ENCODE measurements at regions of chr14 and their contacts with region 1.

Region 1: DNA sequence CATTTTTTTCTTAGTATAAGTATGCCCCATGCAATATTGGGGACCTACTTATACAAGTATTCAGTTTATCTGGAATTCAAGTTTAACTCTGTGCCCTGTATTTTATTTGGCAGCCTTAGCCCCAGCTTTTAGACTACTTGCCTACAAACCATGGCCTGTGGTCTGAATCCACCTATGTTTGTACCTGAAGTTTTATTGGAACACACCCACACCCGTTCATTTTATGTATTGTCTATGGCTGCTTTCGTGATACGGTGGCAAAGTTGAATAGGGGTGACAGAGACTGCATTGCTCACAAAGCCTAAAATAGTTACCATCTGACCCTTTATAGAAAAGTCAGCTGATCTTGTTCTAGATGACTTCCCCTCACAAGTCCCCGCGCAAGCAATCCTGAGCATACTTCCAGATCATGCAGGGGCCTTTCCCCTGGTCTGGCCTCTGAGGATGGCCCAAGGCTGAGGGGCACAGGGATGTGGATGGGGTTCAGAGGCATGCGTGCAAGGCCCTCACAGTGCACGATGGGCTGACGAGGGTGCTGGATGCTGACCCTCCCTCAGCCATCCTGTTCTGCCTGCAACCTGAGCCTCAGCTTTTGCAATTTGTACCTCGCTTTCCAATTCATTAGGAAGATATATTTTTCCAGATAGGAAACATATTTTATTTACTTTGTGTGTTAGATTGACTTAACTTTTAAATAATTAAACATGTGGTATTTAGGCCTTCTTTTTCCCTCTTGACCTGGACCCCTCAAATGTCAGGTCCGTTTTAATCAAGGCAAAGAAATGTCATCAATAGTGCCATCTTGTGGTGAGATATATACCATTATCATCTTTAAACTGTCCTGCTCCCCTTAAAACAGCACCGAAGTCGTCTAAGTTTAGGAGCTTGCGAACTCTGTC is 527.3 kb upstream of the CCDC196 start:
- DNase-seq: no peak
- ATAC-seq: no peak
- H3K4me3 Mint-ChIP-seq: no peak overlapping the region
- H3K27ac Mint-ChIP-seq: no peak overlapping the region
- H3K4me1 Mint-ChIP-seq: peaks cover 21% of the 10 kb centered on the region
- H3K27me3 Mint-ChIP-seq: no peaks in the 10 kb centered on the region

Region 2: GRCh38 chr14:65704850-65705249 is 254.1 kb before region 1 on chr14:
- CTCF ChIA-PET with region 1: no interaction called
- POLR2A ChIA-PET with region 1: no interaction called
- intact Hi-C with region 1: loop called in 1 of 2 experiments (anchors 10 kb)
- DNase-seq: peak; percentile 67
- ATAC-seq: peak; percentile 96
- H3K4me3 Mint-ChIP-seq: no peak overlapping the region
- H3K27ac Mint-ChIP-seq: peak overlapping the region; percentile 84
- H3K4me1 Mint-ChIP-seq: peaks cover 20% of the 10 kb centered on the region
- H3K27me3 Mint-ChIP-seq: no peaks in the 10 kb centered on the region

Region 3: DNA sequence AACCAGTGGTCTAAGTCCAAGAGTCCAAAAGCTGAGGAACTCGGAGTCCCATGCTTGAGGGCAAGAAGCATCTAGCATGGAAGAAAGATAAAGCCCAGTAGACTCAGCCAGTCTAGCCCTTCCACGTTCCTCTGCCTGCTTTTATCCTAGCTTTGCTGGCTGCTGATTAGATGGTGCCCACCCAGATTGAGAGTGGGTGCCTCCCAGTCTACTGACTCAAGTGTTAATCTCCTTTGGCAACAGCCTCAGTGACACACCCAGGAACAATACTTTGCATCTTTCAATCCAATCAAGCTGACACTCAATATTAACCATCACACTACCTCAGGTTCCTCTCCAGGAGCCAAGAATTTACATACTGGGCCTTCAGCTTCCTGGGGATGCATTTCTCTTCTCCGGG is 70.2 kb before region 1 on chr14:
- CTCF ChIA-PET with region 1: no interaction called
- POLR2A ChIA-PET with region 1: no interaction called
- intact Hi-C with region 1: no loop called
- DNase-seq: no peak
- ATAC-seq: no peak
- H3K4me3 Mint-ChIP-seq: no peak overlapping the region
- H3K27ac Mint-ChIP-seq: no peak overlapping the region
- H3K4me1 Mint-ChIP-seq: peaks cover 3% of the 10 kb centered on the region
- H3K27me3 Mint-ChIP-seq: no peaks in the 10 kb centered on the region

Region 4: GRCh38 chr14:65927931-65928356 is 31.0 kb before region 1 on chr14:
- CTCF ChIA-PET with region 1: interaction called, 11 read pairs
- POLR2A ChIA-PET with region 1: no interaction called
- intact Hi-C with region 1: no loop called
- DNase-seq: peak; percentile 93
- ATAC-seq: peak; percentile 96
- H3K4me3 Mint-ChIP-seq: no peak overlapping the region
- H3K27ac Mint-ChIP-seq: peak overlapping the region; percentile 59
- H3K4me1 Mint-ChIP-seq: peaks cover 39% of the 10 kb centered on the region
- H3K27me3 Mint-ChIP-seq: peaks cover 5% of the 10 kb centered on the region

Region 5: GRCh38 chr14:66011855-66012254 is 52.9 kb after region 1 on chr14:
- CTCF ChIA-PET with region 1: interaction called, 4 read pairs
- POLR2A ChIA-PET with region 1: no interaction called
- intact Hi-C with region 1: loop called in 1 of 2 experiments (anchors 2 kb)
- DNase-seq: no peak
- ATAC-seq: peak; percentile 51
- H3K4me3 Mint-ChIP-seq: no peak overlapping the region
- H3K27ac Mint-ChIP-seq: no peak overlapping the region
- H3K4me1 Mint-ChIP-seq: peaks cover 10% of the 10 kb centered on the region
- H3K27me3 Mint-ChIP-seq: peaks cover 4% of the 10 kb centered on the region

Measured in activated CD4-positive, alpha-beta T cell treated with anti-CD3 and anti-CD28 coated beads for 36 hours (primary cell).